GM13977 (cell line): ENCODE measurements at regions of chr6 and their contacts with region 1.

Region 1: DNA sequence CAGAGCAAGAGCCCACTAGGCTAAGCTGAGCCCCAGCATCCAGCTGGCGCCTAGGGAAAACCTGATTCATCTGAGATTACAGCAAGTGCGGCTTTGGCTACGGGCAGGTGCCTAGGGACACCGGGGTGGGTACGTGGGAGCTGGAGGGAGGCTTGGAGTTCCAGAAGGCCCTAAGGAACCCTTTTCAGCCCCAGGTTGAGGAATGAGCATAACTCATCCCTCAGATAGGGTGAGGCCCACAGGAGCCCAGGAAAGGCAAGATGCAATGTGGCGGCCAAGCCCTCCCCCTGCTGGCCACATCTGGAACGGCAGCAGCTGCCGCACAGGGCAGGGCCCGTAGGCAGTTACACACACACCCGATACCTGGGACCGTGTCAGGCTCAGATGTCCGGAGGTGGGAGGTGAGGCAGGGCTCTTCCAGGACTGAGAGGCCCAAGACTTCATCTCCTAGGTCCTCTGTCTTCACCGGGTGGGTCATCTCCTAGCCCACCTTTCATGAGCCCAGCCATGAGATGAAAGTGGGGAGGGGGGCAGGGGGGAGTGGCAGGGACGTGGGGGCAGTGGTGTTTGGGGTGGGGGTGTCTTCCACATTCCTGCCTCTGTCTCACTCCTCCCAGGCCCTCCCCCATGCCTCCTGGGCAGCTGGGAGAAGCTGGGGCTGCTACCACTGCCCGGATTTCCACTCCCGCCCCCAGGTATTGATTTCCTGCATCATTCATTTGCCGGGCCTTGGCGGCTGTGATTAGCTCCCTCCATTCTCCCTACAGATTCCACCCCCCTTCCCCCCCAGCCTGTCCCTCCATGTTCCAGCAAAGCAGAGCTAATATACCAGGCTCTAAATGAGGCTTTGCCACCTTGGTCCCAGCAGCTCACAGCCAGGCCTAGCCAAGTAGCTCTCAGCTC is 5.5 kb downstream of the MDGA1 start:
- DNase-seq: peak; percentile 87
- CTCF ChIP-seq: peak; percentile 100

Region 2: GRCh38 chr6:37381579-37381978 is 310.6 kb before region 1 on chr6:
- in situ Hi-C with region 1: loop called (anchors 25 kb)
- DNase-seq: peak; percentile 65
- CTCF ChIP-seq: peak; percentile 60

Region 3: GRCh38 chr6:37483917-37484785 is 208.0 kb before region 1 on chr6:
- in situ Hi-C with region 1: loop called (anchors 10 kb)
- DNase-seq: peak; percentile 84
- CTCF ChIP-seq: peak; percentile 97